ENCODE measurements at regions of chr13 and their contacts with region 1.

Region 1: DNA sequence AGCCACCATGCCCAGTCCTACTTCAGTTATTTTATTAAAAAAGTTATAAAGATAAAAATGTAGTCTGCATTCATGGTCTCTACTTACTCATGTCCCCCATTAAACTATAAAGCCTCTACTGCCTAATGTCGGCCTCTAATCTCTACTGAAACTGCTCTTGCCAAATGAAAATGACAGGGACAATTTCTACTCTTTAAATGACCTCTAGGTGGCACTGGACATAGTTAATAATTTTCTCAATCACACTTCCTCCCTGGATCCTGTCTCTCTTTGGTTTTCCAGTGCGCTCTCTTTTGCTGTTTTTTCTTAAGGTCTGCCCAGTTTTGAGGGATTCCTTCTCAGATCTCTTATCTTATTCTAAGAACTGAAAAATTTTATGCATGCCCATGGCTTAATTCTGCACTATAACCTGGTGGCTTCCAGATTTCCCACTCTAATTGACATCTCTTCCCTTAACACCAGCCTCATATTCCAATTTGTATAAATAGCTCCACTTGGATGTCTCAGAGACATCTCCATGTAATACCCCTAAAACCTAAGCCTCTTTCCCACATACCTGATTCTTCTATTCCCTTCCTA is 54.3 kb downstream of the MTMR6 start:
- DNase-seq: no peak
- ATAC-seq: peak in 2 of 4 donors; percentile 49
- H3K4me3 ChIP-seq: no peak overlapping the region
- H3K27ac ChIP-seq: no peak overlapping the region
- H3K4me1 ChIP-seq: peaks cover 0 to 2% (median 0%) of the 10 kb centered on the region in 12 donors
- H3K27me3 ChIP-seq: peaks cover 0 to 4% (median 0%) of the 10 kb centered on the region in 9 donors
- CTCF ChIP-seq: peak; percentile 31 to 64 (median 56)
- POLR2A ChIP-seq: no peak

Region 2: GRCh38 chr13:25180775-25181537 is 52.1 kb before region 1 on chr13:
- intact Hi-C with region 1: loop called in 1 of 10 experiments (anchors 2 kb)
- DNase-seq: no peak
- ATAC-seq: no peak
- H3K4me3 ChIP-seq: no peak overlapping the region
- H3K27ac ChIP-seq: no peak overlapping the region
- H3K4me1 ChIP-seq: no peaks in the 10 kb centered on the region
- H3K27me3 ChIP-seq: peaks cover 0 to 28% (median 1%) of the 10 kb centered on the region in 9 donors
- CTCF ChIP-seq: no peak
- POLR2A ChIP-seq: no peak

Region 3: GRCh38 chr13:25375727-25376358 is 142.8 kb after region 1 on chr13:
- intact Hi-C with region 1: loop called in 4 of 10 experiments (anchors 5 to 10 kb)
- DNase-seq: peak in 1 of 5 donors; percentile 12
- ATAC-seq: no peak
- H3K4me3 ChIP-seq: no peak overlapping the region
- H3K27ac ChIP-seq: no peak overlapping the region
- H3K4me1 ChIP-seq: peaks cover 0 to 13% (median 0%) of the 10 kb centered on the region in 12 donors
- H3K27me3 ChIP-seq: peaks cover 13 to 53% (median 42%) of the 10 kb centered on the region in 9 donors
- CTCF ChIP-seq: peak; percentile 42 to 63 (median 54)
- POLR2A ChIP-seq: no peak

Measured in heart left ventricle (tissue), 16 donors.